Activated CD4-positive, alpha-beta T cell treated with anti-CD3 and anti-CD28 coated beads for 36 hours (primary cell): ENCODE measurements at regions of chr13 and their contacts with region 1.

Region 1: DNA sequence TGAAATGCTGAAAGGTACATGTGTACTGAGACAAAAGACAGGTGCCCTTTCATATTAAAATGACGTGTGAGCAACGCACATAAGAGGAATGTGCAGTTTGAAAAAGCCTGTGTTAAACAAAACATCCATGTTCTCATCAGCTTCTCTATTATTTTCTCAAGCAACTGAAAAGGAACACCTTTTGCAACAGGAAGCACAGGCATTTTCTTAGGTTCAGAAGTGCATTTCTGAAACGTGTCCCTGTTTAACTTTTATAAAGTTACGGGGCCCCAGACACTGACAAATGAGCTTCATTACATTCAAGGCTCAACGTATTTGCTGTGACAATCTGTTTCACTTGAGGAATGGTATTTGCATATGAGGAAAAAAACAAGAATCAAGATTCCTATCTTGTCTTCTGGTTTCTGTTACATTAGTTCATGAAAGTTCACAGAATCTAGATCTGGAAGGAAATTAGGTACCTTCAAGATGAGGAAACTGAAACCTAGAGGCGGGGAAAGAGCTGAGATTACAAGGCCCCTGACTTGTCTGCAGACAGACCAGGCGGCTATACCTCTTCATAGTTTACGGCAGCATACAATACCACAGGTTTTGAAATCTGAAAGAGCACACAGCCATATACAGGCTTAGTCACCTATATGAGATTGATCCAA is 431.7 kb downstream of the KLF12 start:
- DNase-seq: peak; percentile 58
- ATAC-seq: peak; percentile 98
- H3K4me3 Mint-ChIP-seq: peak overlapping the region; percentile 57
- H3K27ac Mint-ChIP-seq: peak overlapping the region; percentile 74
- H3K4me1 Mint-ChIP-seq: peaks cover 39% of the 10 kb centered on the region
- H3K27me3 Mint-ChIP-seq: no peaks in the 10 kb centered on the region

Region 2: GRCh38 chr13:73223372-73223781 is 479.2 kb before region 1 on chr13:
- CTCF ChIA-PET with region 1: no interaction called
- POLR2A ChIA-PET with region 1: no interaction called
- intact Hi-C with region 1: loop called (anchors 2 to 5 kb)
- DNase-seq: peak; percentile 54
- ATAC-seq: peak; percentile 59
- H3K4me3 Mint-ChIP-seq: no peak overlapping the region
- H3K27ac Mint-ChIP-seq: no peak overlapping the region
- H3K4me1 Mint-ChIP-seq: peaks cover 21% of the 10 kb centered on the region
- H3K27me3 Mint-ChIP-seq: peaks cover 3% of the 10 kb centered on the region

Region 3: DNA sequence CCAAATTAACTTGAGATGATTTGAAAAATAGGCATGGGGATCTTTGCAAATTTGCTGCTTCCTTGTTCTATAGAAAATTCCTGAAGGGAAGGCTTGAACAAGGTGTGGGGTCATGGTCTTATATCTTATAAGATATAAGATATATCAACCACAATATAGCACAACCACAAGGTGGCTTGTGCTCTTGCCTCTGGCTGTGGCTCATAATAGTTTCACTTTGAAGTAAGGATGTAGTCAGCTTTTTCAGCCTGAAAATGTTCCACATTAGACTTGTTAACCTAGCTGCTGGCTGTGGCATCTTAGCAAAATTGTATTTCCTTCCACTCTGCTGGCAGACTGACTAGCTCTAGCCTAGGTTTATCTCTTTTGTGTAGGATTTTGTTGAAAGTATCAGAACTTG is 474.0 kb before region 1 on chr13:
- CTCF ChIA-PET with region 1: no interaction called
- POLR2A ChIA-PET with region 1: no interaction called
- intact Hi-C with region 1: loop called (anchors 2 to 5 kb)
- DNase-seq: peak; percentile 35
- ATAC-seq: peak; percentile 83
- H3K4me3 Mint-ChIP-seq: no peak overlapping the region
- H3K27ac Mint-ChIP-seq: no peak overlapping the region
- H3K4me1 Mint-ChIP-seq: peaks cover 46% of the 10 kb centered on the region
- H3K27me3 Mint-ChIP-seq: peaks cover 3% of the 10 kb centered on the region

Region 4: DNA sequence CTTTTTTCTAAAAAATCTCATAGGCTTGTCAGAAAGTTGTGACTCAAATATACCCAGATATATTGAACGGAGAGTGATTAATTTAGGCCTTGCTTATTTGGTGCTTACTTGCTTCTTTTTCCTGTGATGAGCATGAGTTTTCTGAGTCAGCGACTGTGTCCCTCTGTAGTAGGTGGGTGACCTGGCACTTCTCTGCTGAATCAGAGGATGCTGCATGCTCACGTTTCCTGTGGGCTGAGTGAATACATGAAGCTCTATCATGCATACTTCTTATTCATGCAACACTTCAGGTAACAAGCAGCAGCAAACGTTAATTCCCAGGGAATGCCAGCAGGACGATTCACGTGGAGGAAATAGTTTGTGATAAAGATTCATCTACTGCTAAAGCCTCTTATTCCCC is 398.7 kb before region 1 on chr13:
- CTCF ChIA-PET with region 1: no interaction called
- POLR2A ChIA-PET with region 1: no interaction called
- intact Hi-C with region 1: loop called in 1 of 2 experiments (anchors 5 kb)
- DNase-seq: peak; percentile 61
- ATAC-seq: peak; percentile 97
- H3K4me3 Mint-ChIP-seq: no peak overlapping the region
- H3K27ac Mint-ChIP-seq: no peak overlapping the region
- H3K4me1 Mint-ChIP-seq: peaks cover 11% of the 10 kb centered on the region
- H3K27me3 Mint-ChIP-seq: peaks cover 2% of the 10 kb centered on the region